ENCODE measurements at regions of chr6 and their contacts with region 1.

Region 1: DNA sequence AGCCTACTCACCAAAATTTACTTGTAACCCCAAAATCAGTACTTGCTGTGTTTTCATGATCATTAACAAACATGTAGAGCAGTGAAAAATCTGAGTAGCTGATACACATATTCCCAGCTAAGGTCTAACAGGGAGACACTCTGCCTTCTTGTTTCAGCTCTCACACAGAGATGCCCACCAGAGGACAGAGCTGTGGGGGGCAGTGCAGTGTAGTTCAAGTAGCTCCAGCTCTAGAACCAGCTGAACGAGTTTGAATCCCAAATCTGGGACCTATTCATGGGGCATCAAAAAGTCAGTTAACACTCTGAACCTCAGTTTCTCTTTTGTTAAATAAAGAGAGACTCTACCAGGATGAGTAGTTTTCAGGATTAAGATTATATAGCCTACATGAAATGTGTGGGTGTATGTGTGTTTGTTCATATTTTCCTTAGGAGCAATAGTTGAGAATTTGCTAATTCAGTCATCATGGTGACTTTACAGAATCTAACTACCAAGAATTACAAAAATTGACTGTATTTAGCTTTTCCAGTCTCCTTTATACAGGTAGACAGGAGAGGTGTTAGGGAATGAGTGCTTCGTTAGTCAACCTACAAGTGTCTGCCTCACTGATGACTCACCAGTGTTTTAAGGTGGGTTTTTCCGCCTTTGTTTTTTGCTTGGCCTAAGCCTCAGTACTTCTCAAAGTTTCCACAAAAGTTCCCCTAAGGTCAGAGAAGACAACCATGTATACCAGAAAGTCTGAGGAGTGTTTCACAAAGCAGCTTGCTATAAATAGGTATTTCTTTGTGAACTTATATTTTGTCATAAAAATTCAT is 164.0 kb upstream of the RUNX2 start:
- DNase-seq: peak; percentile 79
- H3K4me3 Mint-ChIP-seq: peak overlapping the region; percentile 58
- H3K27ac Mint-ChIP-seq: peak overlapping the region; percentile 92
- H3K4me1 Mint-ChIP-seq: peaks cover 38% of the 10 kb centered on the region
- H3K27me3 Mint-ChIP-seq: no peaks in the 10 kb centered on the region

Region 2: DNA sequence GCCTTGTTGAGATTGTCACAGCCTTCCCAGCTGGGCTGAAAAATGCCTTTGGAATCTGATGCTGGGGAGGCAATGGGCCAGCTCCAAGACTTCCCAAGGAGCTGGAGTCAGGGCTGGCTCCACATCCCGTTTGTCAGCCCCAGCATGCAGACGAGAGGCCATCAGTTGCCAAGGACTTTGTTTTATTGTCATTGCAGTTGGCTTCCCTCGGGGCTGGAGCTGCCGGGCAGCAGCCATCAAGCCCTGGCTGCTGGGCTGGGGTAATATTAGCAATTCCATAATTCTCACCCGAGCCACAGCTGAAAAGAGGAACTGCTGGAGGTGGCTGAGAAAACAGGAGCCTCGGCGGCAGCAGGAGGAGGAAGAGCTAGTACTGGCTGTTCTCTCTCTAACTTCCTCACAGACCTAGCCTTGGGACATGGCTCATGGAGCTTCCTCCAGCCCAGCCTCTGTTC is 594.2 kb before region 1 on chr6:
- intact Hi-C with region 1: no loop called
- DNase-seq: no peak
- H3K4me3 Mint-ChIP-seq: no peak overlapping the region
- H3K27ac Mint-ChIP-seq: no peak overlapping the region
- H3K4me1 Mint-ChIP-seq: no peaks in the 10 kb centered on the region
- H3K27me3 Mint-ChIP-seq: peaks cover 11% of the 10 kb centered on the region

Region 3: GRCh38 chr6:44925100-44925739 is 238.9 kb before region 1 on chr6:
- intact Hi-C with region 1: loop called (anchors 2 kb)
- DNase-seq: peak; percentile 83
- H3K4me3 Mint-ChIP-seq: peak overlapping the region; percentile 68
- H3K27ac Mint-ChIP-seq: peak overlapping the region; percentile 74
- H3K4me1 Mint-ChIP-seq: peaks cover 46% of the 10 kb centered on the region
- H3K27me3 Mint-ChIP-seq: no peaks in the 10 kb centered on the region

Region 4: DNA sequence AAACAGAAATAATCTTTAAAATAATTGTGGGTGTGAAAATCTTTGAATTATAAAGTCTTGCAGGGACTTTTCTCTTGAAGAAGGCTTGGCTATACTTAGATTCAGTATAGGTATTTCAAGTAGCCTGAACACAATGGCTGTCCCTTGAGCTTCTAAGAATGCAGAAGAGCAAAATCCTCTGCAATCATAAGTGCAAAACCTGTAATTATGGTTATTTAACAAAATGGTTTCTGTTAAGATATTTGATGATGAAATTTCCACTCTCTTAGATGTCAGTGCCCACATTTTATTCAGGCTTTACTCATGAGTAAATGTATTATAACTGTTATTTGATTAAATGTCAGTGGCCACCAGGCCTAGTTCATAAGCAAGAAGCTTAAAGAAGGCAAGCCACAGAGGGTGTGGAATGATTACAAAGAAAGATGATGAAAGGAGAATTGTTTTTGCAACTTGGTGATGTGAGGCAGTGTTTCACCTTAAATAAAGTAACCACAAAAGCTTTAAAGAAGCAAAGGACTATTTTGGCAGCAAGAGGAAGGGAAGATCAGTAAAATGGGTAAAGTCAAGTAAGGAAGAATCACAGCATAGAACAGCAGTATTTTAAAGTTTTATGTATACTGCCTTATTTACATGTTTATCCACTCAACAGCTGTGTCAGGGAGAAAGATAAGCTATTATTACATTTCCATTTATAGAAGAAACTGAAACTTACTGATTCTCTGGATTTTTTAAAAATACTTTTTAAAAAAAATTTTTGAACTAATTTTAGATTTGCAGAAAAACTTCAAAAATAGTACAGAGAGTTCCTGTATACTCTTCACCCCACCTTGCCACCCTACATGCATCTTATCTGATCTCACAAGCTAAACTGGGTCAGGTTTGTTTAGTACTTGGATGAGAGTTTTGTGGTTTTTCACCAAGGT is 187.2 kb before region 1 on chr6:
- intact Hi-C with region 1: loop called (anchors 5 kb)
- DNase-seq: peak; percentile 75
- H3K4me3 Mint-ChIP-seq: peak overlapping the region; percentile 8
- H3K27ac Mint-ChIP-seq: peak overlapping the region; percentile 71
- H3K4me1 Mint-ChIP-seq: peaks cover 19% of the 10 kb centered on the region
- H3K27me3 Mint-ChIP-seq: no peaks in the 10 kb centered on the region

Region 5: DNA sequence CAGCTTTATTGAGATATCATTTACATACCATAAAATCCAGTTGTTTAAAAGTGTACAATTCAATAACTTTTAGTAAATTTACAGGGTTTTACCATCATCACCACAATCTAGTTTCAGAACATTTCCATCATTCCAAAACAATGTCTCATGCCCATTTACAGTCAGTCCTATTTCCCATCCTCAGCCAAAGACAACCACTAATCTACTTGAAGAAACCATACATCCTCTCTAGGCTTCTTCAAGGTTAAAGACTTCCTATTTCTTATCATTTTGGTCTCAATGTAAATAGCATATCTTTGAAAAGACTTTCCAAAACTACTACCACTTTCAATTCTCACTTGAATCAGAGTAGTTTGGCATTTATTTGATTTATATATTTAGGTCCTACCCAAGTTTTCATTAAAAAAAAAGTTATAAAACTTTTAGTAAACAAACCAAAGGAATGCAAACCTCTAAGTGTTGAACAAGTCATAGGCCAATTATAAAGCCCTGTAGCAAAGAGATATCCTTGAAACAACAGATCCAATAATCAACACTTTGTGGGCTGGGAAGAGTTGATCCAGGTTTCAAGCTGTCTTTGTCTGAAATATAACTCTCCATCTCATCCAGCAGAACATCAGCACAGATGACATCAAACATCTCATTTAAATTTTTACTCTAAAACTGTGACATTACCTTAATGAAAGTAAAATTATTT is 47.3 kb before region 1 on chr6:
- intact Hi-C with region 1: loop called (anchors 1 kb)
- DNase-seq: no peak
- H3K4me3 Mint-ChIP-seq: peak overlapping the region; percentile 2
- H3K27ac Mint-ChIP-seq: peak overlapping the region; percentile 17
- H3K4me1 Mint-ChIP-seq: peaks cover 18% of the 10 kb centered on the region
- H3K27me3 Mint-ChIP-seq: no peaks in the 10 kb centered on the region

Region 6: GRCh38 chr6:45310118-45310788 is 146.1 kb after region 1 on chr6:
- intact Hi-C with region 1: loop called (anchors 10 kb)
- DNase-seq: peak; percentile 81
- H3K4me3 Mint-ChIP-seq: peak overlapping the region; percentile 71
- H3K27ac Mint-ChIP-seq: peak overlapping the region; percentile 83
- H3K4me1 Mint-ChIP-seq: peaks cover 43% of the 10 kb centered on the region
- H3K27me3 Mint-ChIP-seq: no peaks in the 10 kb centered on the region

Region 7: GRCh38 chr6:45421709-45422502 is 257.7 kb after region 1 on chr6:
- intact Hi-C with region 1: loop called (anchors 5 kb)
- DNase-seq: peak; percentile 84
- H3K4me3 Mint-ChIP-seq: peak overlapping the region; percentile 94
- H3K27ac Mint-ChIP-seq: peak overlapping the region; percentile 98
- H3K4me1 Mint-ChIP-seq: peaks cover 44% of the 10 kb centered on the region
- H3K27me3 Mint-ChIP-seq: peaks cover 18% of the 10 kb centered on the region

Region 8: GRCh38 chr6:46011241-46012085 is 847.3 kb after region 1 on chr6:
- intact Hi-C with region 1: loop called (anchors 10 kb)
- DNase-seq: peak; percentile 91
- H3K4me3 Mint-ChIP-seq: peak overlapping the region; percentile 64
- H3K27ac Mint-ChIP-seq: peak overlapping the region; percentile 79
- H3K4me1 Mint-ChIP-seq: peaks cover 52% of the 10 kb centered on the region
- H3K27me3 Mint-ChIP-seq: peaks cover 9% of the 10 kb centered on the region